PC-9 (cell line): ENCODE measurements at regions of chr4 and their contacts with region 1.

Region 1: GRCh38 chr4:119103263-119103662 is 32.4 kb upstream of the MYOZ2 start:
- DNase-seq: peak in 1 of 2 experiments; percentile 97
- H3K4me3 ChIP-seq: peak overlapping the region; percentile 19; the same call in 1 of the 2 replicates
- H3K27ac ChIP-seq: peak overlapping the region; percentile 91
- H3K4me1 ChIP-seq: peaks cover 31% of the 10 kb centered on the region
- H3K27me3 ChIP-seq: no peaks in the 10 kb centered on the region
- CTCF ChIP-seq: no peak

Region 2: GRCh38 chr4:119025916-119026661 is 77.2 kb before region 1 on chr4:
- CTCF ChIA-PET with region 1: no interaction called
- POLR2A ChIA-PET with region 1: no interaction called
- intact Hi-C with region 1: loop called (anchors 5 kb)
- DNase-seq: peak; percentile 12 to 81
- H3K4me3 ChIP-seq: peak overlapping the region; percentile 53; the same call in 1 of the 2 replicates
- H3K27ac ChIP-seq: peak overlapping the region; percentile 97
- H3K4me1 ChIP-seq: peaks cover 20% of the 10 kb centered on the region
- H3K27me3 ChIP-seq: no peaks in the 10 kb centered on the region
- CTCF ChIP-seq: no peak

Region 3: DNA sequence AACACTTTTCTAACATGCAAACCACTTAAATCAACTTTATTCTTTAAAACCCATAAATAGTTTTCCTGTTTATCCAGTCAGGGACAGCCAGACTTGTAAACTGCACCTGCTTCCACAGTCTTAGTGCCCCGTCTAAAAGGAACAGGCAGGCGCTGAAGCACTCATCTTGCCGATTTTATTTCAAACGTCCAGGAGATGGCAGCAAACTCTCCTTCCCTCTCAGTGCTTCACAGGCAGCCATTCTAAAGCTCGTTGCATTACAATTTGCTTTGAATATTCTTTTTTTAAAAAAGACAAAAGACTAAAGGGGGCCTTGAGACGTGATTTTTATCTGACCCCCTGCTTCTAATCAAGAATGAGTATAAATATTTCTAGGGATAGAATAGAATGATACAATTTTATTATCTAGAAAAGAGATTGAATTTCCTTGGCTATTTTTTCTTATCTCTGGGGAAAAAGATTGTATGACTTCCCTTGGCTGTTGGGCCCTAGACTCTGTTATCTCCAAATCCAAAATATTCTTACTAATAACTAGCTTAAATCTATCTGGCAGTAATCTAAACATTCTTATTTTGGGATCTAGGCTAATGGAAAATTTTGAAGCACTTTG is 61.2 kb before region 1 on chr4:
- CTCF ChIA-PET with region 1: no interaction called
- POLR2A ChIA-PET with region 1: interaction called, 14 read pairs
- intact Hi-C with region 1: no loop called
- DNase-seq: peak; percentile 14 to 40
- H3K4me3 ChIP-seq: no peak overlapping the region
- H3K27ac ChIP-seq: no peak overlapping the region
- H3K4me1 ChIP-seq: no peaks in the 10 kb centered on the region
- H3K27me3 ChIP-seq: no peaks in the 10 kb centered on the region
- CTCF ChIP-seq: peak; percentile 69

Region 4: DNA sequence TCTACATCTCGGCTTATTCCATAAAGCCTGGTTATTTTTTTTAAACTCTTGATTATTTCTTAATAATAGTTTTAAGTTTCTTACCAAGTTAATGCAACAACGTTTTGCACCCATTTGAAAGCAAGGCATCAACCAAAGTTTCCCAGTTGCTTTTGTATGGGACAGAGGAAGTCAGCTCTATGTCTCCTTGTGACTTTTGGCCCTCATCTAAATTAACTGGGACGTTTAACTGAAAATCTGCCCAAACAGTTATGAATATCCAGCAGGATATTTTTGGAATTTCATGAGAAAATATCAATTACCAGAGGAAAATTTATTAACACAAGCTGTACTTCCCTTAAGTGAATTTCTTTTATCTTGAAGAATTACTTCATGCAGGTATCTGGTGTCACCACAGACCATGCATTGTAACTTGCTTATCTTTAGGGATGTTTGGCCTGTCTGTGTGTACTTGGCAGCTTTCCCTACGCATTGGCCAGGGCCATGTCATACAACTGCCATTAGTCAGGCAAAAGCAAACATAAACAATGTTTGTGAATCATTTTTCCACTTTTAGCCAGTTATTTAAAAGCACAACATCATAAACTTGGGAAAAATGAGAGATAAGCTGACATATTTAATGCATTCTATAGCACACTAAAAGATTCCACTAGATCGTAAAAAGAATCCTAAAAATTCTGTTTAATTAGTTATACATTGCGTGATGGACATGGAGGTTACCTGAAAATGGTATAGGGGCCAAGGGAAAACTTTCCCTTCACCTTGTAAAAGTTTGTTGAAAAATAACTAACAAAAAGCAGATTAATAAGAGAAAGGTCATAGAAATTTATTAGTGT is 626.8 kb after region 1 on chr4:
- CTCF ChIA-PET with region 1: no interaction called
- POLR2A ChIA-PET with region 1: no interaction called
- intact Hi-C with region 1: loop called (anchors 2 kb)
- DNase-seq: peak; percentile 70 to 91
- H3K4me3 ChIP-seq: peak overlapping the region; percentile 41; the same call in 1 of the 2 replicates
- H3K27ac ChIP-seq: peak overlapping the region; percentile 99
- H3K4me1 ChIP-seq: peaks cover 49% of the 10 kb centered on the region
- H3K27me3 ChIP-seq: no peaks in the 10 kb centered on the region
- CTCF ChIP-seq: no peak